ENCODE measurements at regions of chr12 and their contacts with region 1.

Region 1: GRCh38 chr12:94831081-94831751 is 172.3 kb downstream of the NDUFA12 start:
- DNase-seq: peak; percentile 40
- ATAC-seq: peak; percentile 91
- H3K4me3 Mint-ChIP-seq: peak overlapping the region; percentile 81
- H3K27ac Mint-ChIP-seq: peak overlapping the region; percentile 99
- H3K4me1 Mint-ChIP-seq: peaks cover 58% of the 10 kb centered on the region
- H3K27me3 Mint-ChIP-seq: no peaks in the 10 kb centered on the region
- CTCF ChIP-seq: no peak

Region 2: DNA sequence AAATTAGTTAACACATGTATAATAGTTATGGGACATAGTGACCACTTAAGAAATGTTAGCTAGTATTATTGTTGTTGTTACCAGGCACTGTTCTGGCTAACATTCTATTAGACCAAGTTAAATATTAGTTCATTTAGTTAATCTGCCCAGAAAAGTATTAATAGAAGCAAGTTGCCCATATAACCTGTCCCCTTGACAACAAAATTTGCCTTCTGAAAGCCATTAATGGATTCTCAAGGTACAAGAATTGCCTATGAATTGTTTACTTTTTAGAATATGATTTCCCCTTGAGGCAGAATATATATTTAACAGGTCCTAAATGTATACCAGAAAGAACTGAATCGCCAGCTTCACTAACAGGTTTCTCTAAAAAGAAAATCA is 13.5 kb before region 1 on chr12:
- CTCF ChIA-PET with region 1: interaction called, 10 read pairs
- POLR2A ChIA-PET with region 1: interaction called, 51 read pairs
- intact Hi-C with region 1: loop called (anchors 1 kb)
- DNase-seq: no peak
- ATAC-seq: no peak
- H3K4me3 Mint-ChIP-seq: peak overlapping the region; percentile 87
- H3K27ac Mint-ChIP-seq: peak overlapping the region; percentile 97
- H3K4me1 Mint-ChIP-seq: peaks cover 71% of the 10 kb centered on the region
- H3K27me3 Mint-ChIP-seq: no peaks in the 10 kb centered on the region
- CTCF ChIP-seq: no peak

Region 3: DNA sequence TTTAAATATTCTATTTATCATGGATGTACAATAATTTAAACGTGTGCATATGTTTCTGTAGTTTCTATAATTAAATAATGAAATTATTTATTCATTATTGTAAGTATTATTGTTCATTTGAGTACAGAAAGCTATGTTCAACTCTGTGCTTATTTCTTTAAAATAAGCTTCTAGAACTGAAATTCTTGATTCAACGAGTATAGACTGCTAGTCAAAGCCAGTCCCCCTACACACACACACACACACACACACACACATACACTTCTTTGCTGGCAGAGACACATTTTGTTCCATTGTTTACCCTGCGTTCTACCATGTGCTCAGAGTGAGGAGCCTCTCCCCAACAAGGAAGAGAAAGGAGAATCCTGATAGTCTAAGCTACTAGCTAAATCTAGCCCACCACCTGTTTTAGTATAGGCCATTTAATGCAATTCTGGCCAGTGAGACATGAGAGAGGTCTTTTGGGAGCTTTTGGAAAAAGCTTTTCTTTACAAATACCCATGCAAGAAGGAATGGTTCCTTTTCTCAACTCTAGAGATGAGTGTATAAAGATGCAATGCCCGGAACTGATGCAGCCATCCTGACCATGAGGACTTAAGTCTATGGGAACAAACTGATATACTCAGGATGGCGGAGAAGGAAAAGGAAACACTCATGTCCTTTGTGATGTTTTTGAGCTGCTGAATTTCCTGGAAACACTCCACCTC is 10.8 kb after region 1 on chr12:
- CTCF ChIA-PET with region 1: no interaction called
- POLR2A ChIA-PET with region 1: interaction called, 12 read pairs
- intact Hi-C with region 1: no loop called
- DNase-seq: no peak
- ATAC-seq: no peak
- H3K4me3 Mint-ChIP-seq: no peak overlapping the region
- H3K27ac Mint-ChIP-seq: no peak overlapping the region
- H3K4me1 Mint-ChIP-seq: peaks cover 13% of the 10 kb centered on the region
- H3K27me3 Mint-ChIP-seq: peaks cover 1% of the 10 kb centered on the region
- CTCF ChIP-seq: no peak

Region 4: DNA sequence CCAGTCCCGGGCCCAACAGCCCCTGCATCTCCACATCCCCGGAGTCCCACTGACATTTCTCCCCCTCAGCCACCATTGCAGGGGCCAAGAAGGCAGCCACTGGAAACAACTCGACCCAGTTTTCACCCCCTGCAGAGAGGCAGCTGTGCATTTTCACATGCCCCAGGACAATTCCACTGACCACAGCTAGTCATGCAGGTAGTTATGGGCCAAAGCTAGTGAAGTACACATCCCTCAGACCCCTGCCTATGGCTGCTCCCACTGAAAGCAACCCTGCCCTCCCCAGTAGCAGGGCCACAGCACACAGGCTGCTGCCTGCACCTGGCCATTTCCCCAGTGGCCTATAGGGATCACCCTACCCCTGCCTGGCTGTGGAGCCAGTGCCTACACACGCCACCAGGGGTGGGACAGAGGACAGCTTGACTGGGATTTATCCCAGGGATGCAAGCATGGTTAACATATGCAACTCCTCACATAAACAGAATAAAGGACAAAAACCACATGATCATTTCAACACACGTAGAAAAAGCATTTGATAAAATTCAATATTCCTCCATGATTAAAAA is 18.3 kb after region 1 on chr12:
- CTCF ChIA-PET with region 1: no interaction called
- POLR2A ChIA-PET with region 1: no interaction called
- intact Hi-C with region 1: loop called (anchors 2 kb)
- DNase-seq: no peak
- ATAC-seq: no peak
- H3K4me3 Mint-ChIP-seq: no peak overlapping the region
- H3K27ac Mint-ChIP-seq: no peak overlapping the region
- H3K4me1 Mint-ChIP-seq: peaks cover 24% of the 10 kb centered on the region
- H3K27me3 Mint-ChIP-seq: peaks cover 1% of the 10 kb centered on the region
- CTCF ChIP-seq: no peak

Region 5: GRCh38 chr12:95014554-95014953 is 183.3 kb after region 1 on chr12:
- CTCF ChIA-PET with region 1: no interaction called
- POLR2A ChIA-PET with region 1: no interaction called
- intact Hi-C with region 1: no loop called
- DNase-seq: no peak
- ATAC-seq: no peak
- H3K4me3 Mint-ChIP-seq: no peak overlapping the region
- H3K27ac Mint-ChIP-seq: no peak overlapping the region
- H3K4me1 Mint-ChIP-seq: peaks cover 29% of the 10 kb centered on the region
- H3K27me3 Mint-ChIP-seq: no peaks in the 10 kb centered on the region
- CTCF ChIP-seq: no peak

Region 6: GRCh38 chr12:95312656-95313055 is 481.4 kb after region 1 on chr12:
- CTCF ChIA-PET with region 1: no interaction called
- POLR2A ChIA-PET with region 1: no interaction called
- intact Hi-C with region 1: no loop called
- DNase-seq: no peak
- ATAC-seq: no peak
- H3K4me3 Mint-ChIP-seq: no peak overlapping the region
- H3K27ac Mint-ChIP-seq: no peak overlapping the region
- H3K4me1 Mint-ChIP-seq: no peaks in the 10 kb centered on the region
- H3K27me3 Mint-ChIP-seq: no peaks in the 10 kb centered on the region
- CTCF ChIP-seq: no peak